Activated naive CD4-positive, alpha-beta T cell treated with anti-CD3 and anti-CD28 coated beads for 36 hours (primary cell): ENCODE measurements at regions of chr5 and their contacts with region 1.

Region 1: GRCh38 chr5:472656-473553 is 29.9 kb downstream of the EXOC3 start:
- DNase-seq: peak; percentile 86
- H3K4me3 Mint-ChIP-seq: peak overlapping the region; percentile 78
- H3K27ac Mint-ChIP-seq: peak overlapping the region; percentile 81
- H3K4me1 Mint-ChIP-seq: peaks cover 28% of the 10 kb centered on the region
- H3K27me3 Mint-ChIP-seq: peaks cover 2% of the 10 kb centered on the region

Region 2: GRCh38 chr5:392431-392988 is 80.4 kb before region 1 on chr5:
- CTCF ChIA-PET with region 1: no interaction called
- intact Hi-C with region 1: loop called (anchors 2 kb)
- DNase-seq: peak; percentile 96
- H3K4me3 Mint-ChIP-seq: peak overlapping the region; percentile 69
- H3K27ac Mint-ChIP-seq: peak overlapping the region; percentile 91
- H3K4me1 Mint-ChIP-seq: peaks cover 27% of the 10 kb centered on the region
- H3K27me3 Mint-ChIP-seq: no peaks in the 10 kb centered on the region

Region 3: GRCh38 chr5:458547-459353 is 14.2 kb before region 1 on chr5:
- CTCF ChIA-PET with region 1: interaction called, 4 read pairs
- intact Hi-C with region 1: loop called (anchors 2 kb)
- DNase-seq: peak; percentile 87
- H3K4me3 Mint-ChIP-seq: peak overlapping the region; percentile 21
- H3K27ac Mint-ChIP-seq: peak overlapping the region; percentile 94
- H3K4me1 Mint-ChIP-seq: peaks cover 57% of the 10 kb centered on the region
- H3K27me3 Mint-ChIP-seq: no peaks in the 10 kb centered on the region

Region 4: GRCh38 chr5:1105350-1106265 is 632.7 kb after region 1 on chr5:
- CTCF ChIA-PET with region 1: no interaction called
- intact Hi-C with region 1: loop called (anchors 10 kb)
- DNase-seq: peak; percentile 74
- H3K4me3 Mint-ChIP-seq: peak overlapping the region; percentile 38
- H3K27ac Mint-ChIP-seq: peak overlapping the region; percentile 85
- H3K4me1 Mint-ChIP-seq: peaks cover 73% of the 10 kb centered on the region
- H3K27me3 Mint-ChIP-seq: no peaks in the 10 kb centered on the region